Naive thymus-derived CD4-positive, alpha-beta T cell (primary cell): ENCODE measurements at regions of chr6 and their contacts with region 1.

Region 1: DNA sequence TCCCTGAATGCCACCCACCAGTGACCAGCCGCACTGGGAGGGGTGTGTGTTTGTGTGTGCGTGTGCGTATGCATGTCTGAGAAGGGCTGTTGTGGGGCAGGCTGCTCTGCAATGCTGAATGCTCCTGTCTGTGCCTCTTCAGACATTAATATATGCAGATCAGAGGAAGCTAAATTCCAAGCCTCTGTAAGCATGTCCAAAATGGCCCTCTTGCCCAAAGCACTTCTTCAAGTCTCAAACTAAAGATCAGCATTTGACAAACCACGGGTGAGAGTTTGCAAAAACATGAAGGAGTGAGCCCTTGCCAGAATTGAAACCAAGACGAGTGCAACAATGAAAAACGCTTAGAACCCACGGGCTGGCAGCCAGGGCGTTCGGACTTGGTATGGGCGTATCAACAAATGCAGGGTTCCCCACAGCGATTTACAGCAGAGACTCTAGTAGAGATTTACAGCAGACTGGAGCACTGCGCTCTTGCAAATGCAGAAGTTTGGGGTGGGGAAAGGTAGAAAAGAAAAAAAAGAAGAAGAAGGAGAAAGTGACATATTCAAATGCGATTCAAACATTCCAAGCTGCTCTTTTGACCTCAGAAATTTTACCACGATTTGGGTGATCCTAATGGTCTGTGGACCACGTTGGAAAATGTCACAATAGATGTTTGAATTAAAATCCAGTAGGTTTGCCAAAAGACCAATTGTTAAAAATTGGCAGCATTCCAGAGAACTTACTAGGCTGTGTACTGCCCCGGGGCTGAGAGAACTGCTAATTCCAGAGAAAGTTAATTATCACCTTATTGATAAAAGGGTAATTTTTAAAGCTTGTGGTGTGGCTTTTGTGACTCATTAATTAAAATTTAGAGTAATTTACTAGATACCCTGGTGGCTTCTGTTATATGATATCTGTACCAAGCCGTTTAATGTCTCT is 3.5 kb downstream of the SCML4 start:
- DNase-seq: peak in 8 of 9 donors; percentile 13 to 62 (median 51)
- ATAC-seq: peak; percentile 9
- H3K4me3 ChIP-seq: peak overlapping the region; percentile 76
- H3K4me3 Mint-ChIP-seq: peak overlapping the region; percentile 85 to 98 (median 95)
- H3K27ac ChIP-seq: peak overlapping the region; percentile 95
- H3K27ac Mint-ChIP-seq: peak overlapping the region; percentile 96 to 100 (median 99)
- H3K4me1 ChIP-seq: peaks cover 57 to 59% of the 10 kb centered on the region in 2 donors
- H3K4me1 Mint-ChIP-seq: peaks cover 45 to 83% (median 81%) of the 10 kb centered on the region in 7 donors
- H3K27me3 ChIP-seq: no peaks in the 10 kb centered on the region
- H3K27me3 Mint-ChIP-seq: no peaks in the 10 kb centered on the region

Region 2: DNA sequence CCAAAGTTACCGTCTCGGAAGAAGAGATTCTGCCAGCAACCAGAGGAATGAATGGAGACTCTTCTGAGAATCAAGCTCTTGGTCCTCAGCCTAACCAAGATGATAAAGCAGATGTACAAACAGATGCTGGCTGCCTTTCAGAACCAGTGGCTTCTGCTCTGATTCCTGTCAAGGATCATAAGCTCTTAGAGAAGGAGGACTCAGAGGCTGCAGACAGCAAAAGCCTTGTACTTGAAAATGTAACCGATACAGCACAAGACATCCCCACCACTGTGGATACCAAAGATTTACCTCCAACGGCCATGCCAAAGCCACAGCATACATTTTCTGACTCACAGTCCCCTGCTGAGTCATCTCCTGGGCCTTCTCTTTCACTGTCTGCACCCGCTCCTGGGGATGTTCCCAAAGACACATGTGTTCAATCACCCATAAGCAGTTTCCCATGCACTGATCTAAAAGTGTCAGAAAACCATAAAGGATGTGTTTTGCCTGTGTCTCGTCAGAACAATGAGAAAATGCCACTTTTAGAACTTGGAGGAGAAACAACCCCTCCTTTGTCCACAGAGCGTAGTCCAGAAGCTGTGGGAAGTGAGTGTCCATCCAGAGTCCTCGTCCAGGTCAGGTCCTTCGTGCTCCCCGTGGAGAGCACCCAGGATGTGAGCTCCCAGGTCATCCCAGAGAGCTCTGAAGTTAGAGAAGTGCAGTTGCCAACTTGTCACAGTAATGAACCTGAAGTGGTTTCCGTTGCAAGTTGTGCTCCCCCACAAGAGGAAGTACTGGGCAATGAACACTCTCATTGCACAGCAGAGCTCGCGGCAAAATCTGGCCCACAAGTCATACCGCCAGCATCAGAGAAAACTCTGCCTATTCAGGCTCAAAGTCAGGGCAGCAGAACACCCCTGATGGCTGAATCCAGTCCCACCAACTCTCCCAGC is 1300.9 kb before region 1 on chr6:
- CTCF ChIA-PET with region 1: no interaction called
- POLR2A ChIA-PET with region 1: no interaction called
- intact Hi-C with region 1: loop called (anchors 5 kb)
- DNase-seq: peak; percentile 38 to 80 (median 72)
- ATAC-seq: peak; percentile 68
- H3K4me3 ChIP-seq: peak overlapping the region; percentile 69
- H3K4me3 Mint-ChIP-seq: peak overlapping the region; percentile 82 to 96 (median 93)
- H3K27ac ChIP-seq: peak overlapping the region; percentile 86
- H3K27ac Mint-ChIP-seq: peak overlapping the region; percentile 92 to 99 (median 95)
- H3K4me1 ChIP-seq: peaks cover 42 to 47% of the 10 kb centered on the region in 2 donors
- H3K4me1 Mint-ChIP-seq: peaks cover 36 to 87% (median 71%) of the 10 kb centered on the region in 7 donors
- H3K27me3 ChIP-seq: no peaks in the 10 kb centered on the region
- H3K27me3 Mint-ChIP-seq: no peaks in the 10 kb centered on the region

Region 3: GRCh38 chr6:107704347-107705013 is 116.1 kb before region 1 on chr6:
- CTCF ChIA-PET with region 1: no interaction called
- POLR2A ChIA-PET with region 1: interaction called, 12 read pairs
- intact Hi-C with region 1: no loop called
- DNase-seq: peak in 3 of 9 donors; percentile 21 to 39 (median 34)
- ATAC-seq: peak; percentile 44
- H3K4me3 ChIP-seq: no peak overlapping the region
- H3K4me3 Mint-ChIP-seq: no peak overlapping the region
- H3K27ac ChIP-seq: peak overlapping the region; percentile 34
- H3K27ac Mint-ChIP-seq: peak overlapping the region in 8 of 9 donors; percentile 52 to 89 (median 74)
- H3K4me1 ChIP-seq: peaks cover 0 to 11% of the 10 kb centered on the region in 2 donors
- H3K4me1 Mint-ChIP-seq: peaks cover 11 to 71% (median 46%) of the 10 kb centered on the region in 7 donors
- H3K27me3 ChIP-seq: no peaks in the 10 kb centered on the region
- H3K27me3 Mint-ChIP-seq: peaks cover 0 to 3% (median 0%) of the 10 kb centered on the region in 5 donors

Region 4: GRCh38 chr6:107740496-107741190 is 80.0 kb before region 1 on chr6:
- CTCF ChIA-PET with region 1: interaction called, 23 read pairs
- POLR2A ChIA-PET with region 1: interaction called, 124 read pairs
- intact Hi-C with region 1: loop called (anchors 1 kb)
- DNase-seq: peak in 7 of 9 donors; percentile 35 to 48 (median 42)
- ATAC-seq: peak; percentile 43
- H3K4me3 ChIP-seq: peak overlapping the region; percentile 48
- H3K4me3 Mint-ChIP-seq: peak overlapping the region; percentile 72 to 90 (median 82)
- H3K27ac ChIP-seq: peak overlapping the region; percentile 73
- H3K27ac Mint-ChIP-seq: peak overlapping the region; percentile 85 to 98 (median 95)
- H3K4me1 ChIP-seq: peaks cover 54 to 65% of the 10 kb centered on the region in 2 donors
- H3K4me1 Mint-ChIP-seq: peaks cover 47 to 92% (median 86%) of the 10 kb centered on the region in 7 donors
- H3K27me3 ChIP-seq: no peaks in the 10 kb centered on the region
- H3K27me3 Mint-ChIP-seq: no peaks in the 10 kb centered on the region

Region 5: DNA sequence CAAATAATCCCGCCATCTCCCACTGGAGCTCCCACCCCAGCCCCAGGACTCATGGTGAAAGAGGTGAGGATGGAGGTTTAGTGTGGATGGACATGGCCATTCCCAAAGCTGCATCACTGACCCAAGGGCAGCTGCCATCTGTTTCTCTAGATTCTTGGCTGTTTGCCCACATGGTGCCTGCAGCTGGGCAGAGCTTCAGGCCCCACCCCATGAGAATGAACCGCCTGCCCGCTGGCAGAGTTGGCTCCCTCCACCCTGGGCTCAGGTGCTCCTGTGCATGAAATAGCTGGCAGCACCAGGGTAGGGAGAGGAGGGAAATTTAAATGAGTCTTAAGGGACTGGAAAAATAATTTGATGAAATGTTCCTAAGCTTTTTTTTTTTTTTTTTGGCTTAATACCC is 13.9 kb before region 1 on chr6:
- CTCF ChIA-PET with region 1: interaction called, 6 read pairs
- POLR2A ChIA-PET with region 1: interaction called, 40 read pairs
- intact Hi-C with region 1: loop called in 1 of 2 experiments (anchors 1 kb)
- DNase-seq: no peak
- ATAC-seq: no peak
- H3K4me3 ChIP-seq: no peak overlapping the region
- H3K4me3 Mint-ChIP-seq: peak overlapping the region in 1 of 10 donors; percentile 50
- H3K27ac ChIP-seq: peak overlapping the region; percentile 10
- H3K27ac Mint-ChIP-seq: peak overlapping the region in 6 of 9 donors; percentile 14 to 91 (median 79)
- H3K4me1 ChIP-seq: peaks cover 12 to 42% of the 10 kb centered on the region in 2 donors
- H3K4me1 Mint-ChIP-seq: peaks cover 27 to 90% (median 83%) of the 10 kb centered on the region in 7 donors
- H3K27me3 ChIP-seq: no peaks in the 10 kb centered on the region
- H3K27me3 Mint-ChIP-seq: no peaks in the 10 kb centered on the region

Region 6: GRCh38 chr6:108348655-108349349 is 528.2 kb after region 1 on chr6:
- CTCF ChIA-PET with region 1: no interaction called
- POLR2A ChIA-PET with region 1: no interaction called
- intact Hi-C with region 1: loop called in 1 of 2 experiments (anchors 5 kb)
- DNase-seq: peak in 1 of 9 donors; percentile 2
- ATAC-seq: peak; percentile 22
- H3K4me3 ChIP-seq: no peak overlapping the region
- H3K4me3 Mint-ChIP-seq: peak overlapping the region in 1 of 10 donors; percentile 70
- H3K27ac ChIP-seq: no peak overlapping the region
- H3K27ac Mint-ChIP-seq: peak overlapping the region in 5 of 9 donors; percentile 10 to 89 (median 24)
- H3K4me1 ChIP-seq: no peaks in the 10 kb centered on the region
- H3K4me1 Mint-ChIP-seq: peaks cover 5 to 19% (median 8%) of the 10 kb centered on the region in 7 donors
- H3K27me3 ChIP-seq: no peaks in the 10 kb centered on the region
- H3K27me3 Mint-ChIP-seq: no peaks in the 10 kb centered on the region

Region 7: GRCh38 chr6:109455502-109456282 is 1635.1 kb after region 1 on chr6 and contains the start of gene MICAL1:
- CTCF ChIA-PET with region 1: no interaction called
- POLR2A ChIA-PET with region 1: no interaction called
- intact Hi-C with region 1: loop called in 1 of 2 experiments (anchors 10 kb)
- DNase-seq: peak; percentile 55 to 79 (median 72)
- ATAC-seq: peak; percentile 82
- H3K4me3 ChIP-seq: peak within 1 kb of the TSS; percentile 81
- H3K4me3 Mint-ChIP-seq: peak within 1 kb of the TSS; percentile 95 to 99 (median 97)
- H3K27ac ChIP-seq: peak within 1 kb of the TSS; percentile 94
- H3K27ac Mint-ChIP-seq: peak within 1 kb of the TSS; percentile 83 to 99 (median 97)
- H3K4me1 ChIP-seq: peaks cover 40 to 45% of the 10 kb centered on the region in 2 donors
- H3K4me1 Mint-ChIP-seq: peaks cover 29 to 68% (median 62%) of the 10 kb centered on the region in 7 donors
- H3K27me3 ChIP-seq: no peaks in the 10 kb centered on the region
- H3K27me3 Mint-ChIP-seq: no peaks in the 10 kb centered on the region
- total RNA-seq, gene MICAL1: 61.4 to 125 (median 78.7) TPM